Right lobe of liver (tissue), 6 donors: ENCODE measurements at regions of chr1 and their contacts with region 1.

Region 1: DNA sequence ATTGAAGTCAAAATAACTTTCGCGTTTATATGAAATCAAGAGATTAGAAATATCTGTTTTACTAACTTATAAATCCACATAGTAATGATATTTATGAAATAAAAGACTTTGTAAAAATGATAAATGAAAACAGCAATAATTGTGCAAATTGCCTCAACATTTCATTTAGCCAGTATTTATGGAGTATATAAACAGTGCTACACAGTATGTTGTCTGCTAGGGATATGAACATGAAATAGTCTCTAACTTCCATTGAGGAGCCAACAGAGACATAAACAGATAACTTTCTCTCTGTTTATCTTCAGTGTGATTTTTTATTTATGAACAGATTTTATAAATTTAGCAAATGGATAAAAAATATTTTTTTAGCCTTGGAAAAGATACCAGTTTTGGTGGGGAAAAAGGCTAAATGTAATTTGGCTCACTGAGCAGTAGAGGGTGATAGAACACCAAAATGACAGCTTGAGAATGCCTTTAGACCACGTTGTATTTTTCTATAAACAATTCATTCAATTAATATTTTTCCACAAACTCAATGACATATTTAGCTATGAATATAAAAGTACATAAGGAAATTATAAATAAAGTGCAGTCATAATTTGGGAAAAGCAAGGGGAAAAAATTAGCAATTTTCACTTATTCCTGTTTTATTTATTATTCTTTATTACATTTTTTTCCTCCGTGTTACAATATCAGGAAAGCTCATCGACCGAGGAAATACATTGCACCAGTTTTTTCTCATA is 47.5 kb upstream of the EEIG2 start:
- DNase-seq: no peak
- ATAC-seq: peak; percentile 68 to 83 (median 78)
- H3K4me3 ChIP-seq: no peak overlapping the region
- H3K27ac ChIP-seq: no peak overlapping the region
- H3K4me1 ChIP-seq: no peaks in the 10 kb centered on the region
- H3K27me3 ChIP-seq: no peaks in the 10 kb centered on the region
- CTCF ChIP-seq: peak; percentile 80 to 91 (median 85)
- POLR2A ChIP-seq: no peak

Region 2: DNA sequence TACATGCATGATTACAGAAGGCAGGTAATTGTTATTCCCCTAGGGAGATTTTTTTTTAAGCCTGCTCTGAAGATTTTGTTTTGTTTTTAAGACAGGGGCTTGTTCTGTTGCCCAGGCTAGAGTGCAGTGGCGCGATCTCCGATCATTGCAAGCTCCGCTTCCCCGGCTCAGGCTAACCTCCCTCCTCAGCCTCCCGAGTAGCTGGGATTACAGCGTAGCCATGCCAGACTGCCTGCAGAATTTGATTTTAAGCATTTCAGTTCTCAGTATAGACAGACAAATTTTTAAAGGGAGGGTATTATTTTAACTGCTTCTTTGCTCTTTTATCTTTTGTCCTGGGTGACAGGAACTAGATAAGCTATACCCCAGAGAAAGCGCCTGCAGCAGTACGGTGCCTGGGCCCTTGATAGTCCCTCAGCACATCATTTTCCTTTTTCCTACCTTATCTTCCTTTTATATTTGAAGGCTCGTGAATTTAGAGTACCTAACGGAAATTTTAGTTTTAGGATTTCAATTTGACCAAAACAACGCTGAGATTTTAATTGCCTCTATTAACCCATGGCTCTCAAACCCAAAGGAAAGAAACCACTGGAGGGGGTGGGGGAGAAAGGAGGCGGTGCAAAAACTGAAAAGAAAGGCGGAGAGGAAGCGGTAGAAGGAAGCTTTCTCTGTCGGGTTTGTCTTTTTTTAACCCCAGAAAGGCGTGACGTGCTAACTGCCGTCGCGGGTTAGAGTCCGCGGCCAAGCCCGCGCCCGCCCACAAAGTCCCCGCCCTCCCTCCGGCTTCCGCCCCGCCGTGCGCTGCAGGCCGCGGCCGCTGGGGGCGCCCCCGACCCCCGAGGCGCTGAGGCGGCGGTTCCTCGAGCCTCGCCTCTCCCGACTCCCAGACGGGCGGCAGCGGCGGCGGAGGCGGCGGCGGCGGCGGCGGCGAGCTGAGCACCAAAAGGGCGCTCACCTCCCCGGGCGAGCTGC is 47.1 kb after region 1 on chr1 and contains the start of gene EEIG2:
- intact Hi-C with region 1: loop called in 1 of 2 experiments (anchors 10 kb)
- DNase-seq: peak; percentile 89 to 91 (median 89)
- ATAC-seq: peak; percentile 96 to 98 (median 97)
- H3K4me3 ChIP-seq: peak within 1 kb of the TSS; percentile 54 to 61 (median 58)
- H3K27ac ChIP-seq: peak within 1 kb of the TSS; percentile 57 to 65 (median 59)
- H3K4me1 ChIP-seq: peaks cover 0 to 10% (median 0%) of the 10 kb centered on the region in 4 donors
- H3K27me3 ChIP-seq: no peaks in the 10 kb centered on the region
- CTCF ChIP-seq: peak; percentile 75 to 93 (median 83)
- POLR2A ChIP-seq: peak; percentile 65
- total RNA-seq, gene EEIG2: 0.88 to 6.5 (median 2.6) TPM

Region 3: DNA sequence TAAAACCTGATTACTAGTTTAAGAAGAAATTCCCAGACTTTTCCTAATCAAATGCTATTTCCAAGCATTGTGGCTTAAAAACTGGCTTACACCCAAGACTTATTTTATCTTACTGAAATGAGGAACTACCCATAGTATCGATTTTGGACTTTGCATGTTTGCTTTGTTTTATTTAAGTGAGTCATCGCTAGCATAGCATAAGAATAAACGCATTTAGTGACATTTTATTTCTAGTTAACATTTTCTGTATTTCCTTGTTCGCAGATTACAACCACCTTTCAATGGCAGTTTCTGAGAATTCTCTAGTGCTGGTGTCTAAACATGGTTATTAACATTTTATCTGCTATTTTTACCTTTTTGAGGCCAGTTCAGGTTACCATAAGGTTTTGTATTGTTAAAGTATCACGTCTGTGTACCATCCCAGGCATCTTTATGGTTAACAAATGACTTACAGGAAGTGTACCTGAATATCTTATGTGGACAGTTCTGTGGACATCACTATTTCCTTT is 72.0 kb after region 1 on chr1:
- intact Hi-C with region 1: no loop called
- DNase-seq: no peak
- ATAC-seq: peak in 3 of 4 donors; percentile 28 to 84 (median 71)
- H3K4me3 ChIP-seq: no peak overlapping the region
- H3K27ac ChIP-seq: peak overlapping the region in 1 of 3 donors; percentile 25
- H3K4me1 ChIP-seq: peaks cover 0 to 13% (median 6%) of the 10 kb centered on the region in 4 donors
- H3K27me3 ChIP-seq: no peaks in the 10 kb centered on the region
- CTCF ChIP-seq: no peak
- POLR2A ChIP-seq: no peak